ENCODE measurements at regions of chr13 and their contacts with region 1.

Region 1: DNA sequence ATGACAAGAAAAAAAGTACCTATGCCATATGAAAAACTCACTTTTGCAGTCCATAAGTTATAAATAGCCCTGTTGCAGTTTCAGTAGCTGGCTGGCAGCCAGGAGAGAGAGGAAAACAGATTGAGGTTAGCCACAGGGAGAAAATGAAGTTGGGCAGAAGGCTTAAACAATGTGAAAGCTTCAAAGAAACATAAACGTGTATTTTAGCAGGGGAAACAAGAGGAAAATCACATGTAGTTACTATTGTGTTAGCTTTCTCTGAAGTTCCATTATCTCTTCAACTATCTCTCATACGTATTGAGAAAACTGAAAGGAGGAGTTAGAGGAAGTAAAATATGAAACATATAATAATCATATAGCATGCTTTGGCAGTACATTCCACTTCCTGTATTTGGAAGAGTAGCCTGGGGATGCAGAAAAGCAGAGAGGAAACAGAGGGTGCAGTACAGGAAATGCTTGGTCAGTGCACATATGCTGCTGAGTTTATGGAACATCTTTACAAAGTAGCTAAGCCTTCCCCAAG is 1551.1 kb downstream of the EFNB2 start:
- DNase-seq: peak in 4 of 5 donors; percentile 27 to 51 (median 45)
- H3K4me3 ChIP-seq: no peak overlapping the region
- H3K4me3 Mint-ChIP-seq: peak overlapping the region in 7 of 8 donors; percentile 39 to 86 (median 50)
- H3K27ac ChIP-seq: no peak overlapping the region
- H3K27ac Mint-ChIP-seq: peak overlapping the region; percentile 15 to 92 (median 53)
- H3K4me1 ChIP-seq: peaks cover 17% of the 10 kb centered on the region
- H3K4me1 Mint-ChIP-seq: peaks cover 13 to 23% (median 16%) of the 10 kb centered on the region in 4 donors
- H3K27me3 ChIP-seq: no peaks in the 10 kb centered on the region
- H3K27me3 Mint-ChIP-seq: no peaks in the 10 kb centered on the region

Region 2: GRCh38 chr13:104900186-104900817 is 84.1 kb before region 1 on chr13:
- CTCF ChIA-PET with region 1: no interaction called
- POLR2A ChIA-PET with region 1: no interaction called
- intact Hi-C with region 1: loop called (anchors 10 kb)
- DNase-seq: no peak
- H3K4me3 ChIP-seq: no peak overlapping the region
- H3K4me3 Mint-ChIP-seq: no peak overlapping the region
- H3K27ac ChIP-seq: no peak overlapping the region
- H3K27ac Mint-ChIP-seq: no peak overlapping the region
- H3K4me1 ChIP-seq: no peaks in the 10 kb centered on the region
- H3K4me1 Mint-ChIP-seq: no peaks in the 10 kb centered on the region
- H3K27me3 ChIP-seq: no peaks in the 10 kb centered on the region
- H3K27me3 Mint-ChIP-seq: no peaks in the 10 kb centered on the region

Region 3: DNA sequence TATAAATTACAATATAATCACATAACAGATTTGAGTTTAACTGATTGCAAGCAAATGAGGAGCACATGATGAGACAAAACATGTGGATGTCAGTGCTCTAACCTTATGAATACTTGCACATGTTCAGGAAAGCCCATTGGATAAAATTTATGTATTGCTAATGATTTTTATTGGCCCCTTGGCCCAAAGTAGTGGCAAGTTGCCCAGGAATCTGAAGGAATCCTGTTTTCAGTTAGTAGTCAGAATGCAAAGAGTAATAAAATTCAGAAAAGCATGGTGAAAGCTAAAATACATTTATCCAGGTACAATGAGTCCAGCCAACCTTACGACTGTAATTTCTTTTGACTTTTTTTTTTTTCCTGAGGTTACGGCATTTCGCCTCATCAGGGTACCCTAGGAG is 11.7 kb after region 1 on chr13:
- CTCF ChIA-PET with region 1: no interaction called
- POLR2A ChIA-PET with region 1: no interaction called
- intact Hi-C with region 1: no loop called
- DNase-seq: no peak
- H3K4me3 ChIP-seq: no peak overlapping the region
- H3K4me3 Mint-ChIP-seq: no peak overlapping the region
- H3K27ac ChIP-seq: no peak overlapping the region
- H3K27ac Mint-ChIP-seq: no peak overlapping the region
- H3K4me1 ChIP-seq: no peaks in the 10 kb centered on the region
- H3K4me1 Mint-ChIP-seq: no peaks in the 10 kb centered on the region
- H3K27me3 ChIP-seq: no peaks in the 10 kb centered on the region
- H3K27me3 Mint-ChIP-seq: no peaks in the 10 kb centered on the region

Region 4: GRCh38 chr13:105063676-105064075 is 79.3 kb after region 1 on chr13:
- CTCF ChIA-PET with region 1: no interaction called
- POLR2A ChIA-PET with region 1: no interaction called
- intact Hi-C with region 1: no loop called
- DNase-seq: no peak
- H3K4me3 ChIP-seq: no peak overlapping the region
- H3K4me3 Mint-ChIP-seq: no peak overlapping the region
- H3K27ac ChIP-seq: no peak overlapping the region
- H3K27ac Mint-ChIP-seq: no peak overlapping the region
- H3K4me1 ChIP-seq: no peaks in the 10 kb centered on the region
- H3K4me1 Mint-ChIP-seq: no peaks in the 10 kb centered on the region
- H3K27me3 ChIP-seq: no peaks in the 10 kb centered on the region
- H3K27me3 Mint-ChIP-seq: no peaks in the 10 kb centered on the region

Measured in CD4-positive, alpha-beta memory T cell (primary cell).